ENCODE measurements at regions of chr6 and their contacts with region 1.

Region 1: DNA sequence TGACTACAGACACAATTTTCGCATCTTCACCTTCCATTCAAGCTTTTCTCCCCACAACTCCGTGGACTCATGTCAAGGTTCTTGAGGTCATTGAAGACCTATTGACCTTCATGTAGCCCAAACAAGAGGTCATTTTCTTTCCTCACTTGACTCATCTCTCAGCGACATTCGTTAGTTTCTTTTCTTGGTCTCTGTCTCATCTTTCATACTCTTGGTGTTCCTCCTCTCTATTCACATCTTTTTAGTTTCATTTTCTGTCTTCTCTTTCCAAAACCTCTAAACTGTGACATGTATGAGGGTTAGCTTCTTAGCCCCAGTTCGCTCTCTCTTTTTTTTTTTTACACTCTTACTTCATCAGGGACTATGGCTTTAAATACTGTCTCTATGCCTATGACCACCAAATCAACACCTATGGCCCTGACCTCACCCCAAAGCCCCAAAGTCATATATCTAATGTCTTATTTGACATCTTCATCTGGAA is 128.6 kb upstream of the BACH2 start:
- DNase-seq: peak; percentile 33
- H3K4me3 Mint-ChIP-seq: peak overlapping the region; percentile 72
- H3K27ac Mint-ChIP-seq: peak overlapping the region; percentile 91
- H3K4me1 Mint-ChIP-seq: peaks cover 25% of the 10 kb centered on the region
- H3K27me3 Mint-ChIP-seq: no peaks in the 10 kb centered on the region

Region 2: DNA sequence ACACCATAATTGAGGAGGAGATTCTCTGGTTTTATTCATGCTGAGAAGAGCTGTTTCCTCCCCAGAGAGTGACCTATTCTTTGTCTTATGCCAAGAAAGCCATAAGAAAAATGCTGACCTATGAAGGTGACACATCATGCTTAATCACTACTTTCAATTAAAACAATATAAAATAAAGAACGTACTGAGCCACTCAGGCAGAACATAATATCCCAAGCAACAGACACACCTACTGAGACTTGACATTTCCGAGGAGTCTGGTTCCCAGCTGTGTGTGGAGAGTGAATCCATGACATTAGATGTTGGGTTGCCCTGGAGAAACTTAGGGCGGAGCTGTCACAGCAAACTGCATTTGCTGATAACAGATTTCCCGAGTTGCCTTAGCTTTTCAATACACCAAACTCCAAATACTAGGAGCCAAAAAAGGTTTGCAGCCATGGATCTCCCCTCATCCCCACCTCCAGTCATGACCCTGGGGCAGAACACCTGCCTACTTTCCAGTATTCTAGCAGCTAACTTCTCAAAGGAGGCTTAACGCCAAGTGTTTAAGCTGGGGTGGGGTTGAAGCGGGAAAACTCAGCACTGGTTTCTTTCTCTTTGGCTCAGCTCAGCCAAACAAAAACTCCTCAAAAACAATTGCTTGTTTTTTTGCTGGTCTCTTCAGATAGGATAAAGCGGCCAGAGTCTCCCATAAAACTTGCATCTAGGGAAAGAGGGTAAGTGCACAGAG is 220.7 kb before region 1 on chr6:
- CTCF ChIA-PET with region 1: no interaction called
- POLR2A ChIA-PET with region 1: no interaction called
- DNase-seq: no peak
- H3K4me3 Mint-ChIP-seq: no peak overlapping the region
- H3K27ac Mint-ChIP-seq: no peak overlapping the region
- H3K4me1 Mint-ChIP-seq: peaks cover 23% of the 10 kb centered on the region
- H3K27me3 Mint-ChIP-seq: peaks cover 5% of the 10 kb centered on the region

Region 3: GRCh38 chr6:90403489-90404381 is 21.5 kb before region 1 on chr6:
- CTCF ChIA-PET with region 1: interaction called, 12 read pairs
- POLR2A ChIA-PET with region 1: interaction called, 42 read pairs
- DNase-seq: no peak
- H3K4me3 Mint-ChIP-seq: peak overlapping the region; percentile 10
- H3K27ac Mint-ChIP-seq: peak overlapping the region; percentile 94
- H3K4me1 Mint-ChIP-seq: peaks cover 86% of the 10 kb centered on the region
- H3K27me3 Mint-ChIP-seq: peaks cover 5% of the 10 kb centered on the region

Region 4: GRCh38 chr6:90444160-90444714 is 19.0 kb after region 1 on chr6:
- CTCF ChIA-PET with region 1: interaction called, 4 read pairs
- POLR2A ChIA-PET with region 1: interaction called, 11 read pairs
- DNase-seq: no peak
- H3K4me3 Mint-ChIP-seq: peak overlapping the region; percentile 2
- H3K27ac Mint-ChIP-seq: peak overlapping the region; percentile 3
- H3K4me1 Mint-ChIP-seq: peaks cover 26% of the 10 kb centered on the region
- H3K27me3 Mint-ChIP-seq: no peaks in the 10 kb centered on the region

Region 5: GRCh38 chr6:90466154-90466940 is 41.1 kb after region 1 on chr6:
- CTCF ChIA-PET with region 1: interaction called, 6 read pairs
- POLR2A ChIA-PET with region 1: interaction called, 71 read pairs
- DNase-seq: peak; percentile 53
- H3K4me3 Mint-ChIP-seq: peak overlapping the region; percentile 2
- H3K27ac Mint-ChIP-seq: peak overlapping the region; percentile 82
- H3K4me1 Mint-ChIP-seq: peaks cover 96% of the 10 kb centered on the region
- H3K27me3 Mint-ChIP-seq: peaks cover 10% of the 10 kb centered on the region

Region 6: DNA sequence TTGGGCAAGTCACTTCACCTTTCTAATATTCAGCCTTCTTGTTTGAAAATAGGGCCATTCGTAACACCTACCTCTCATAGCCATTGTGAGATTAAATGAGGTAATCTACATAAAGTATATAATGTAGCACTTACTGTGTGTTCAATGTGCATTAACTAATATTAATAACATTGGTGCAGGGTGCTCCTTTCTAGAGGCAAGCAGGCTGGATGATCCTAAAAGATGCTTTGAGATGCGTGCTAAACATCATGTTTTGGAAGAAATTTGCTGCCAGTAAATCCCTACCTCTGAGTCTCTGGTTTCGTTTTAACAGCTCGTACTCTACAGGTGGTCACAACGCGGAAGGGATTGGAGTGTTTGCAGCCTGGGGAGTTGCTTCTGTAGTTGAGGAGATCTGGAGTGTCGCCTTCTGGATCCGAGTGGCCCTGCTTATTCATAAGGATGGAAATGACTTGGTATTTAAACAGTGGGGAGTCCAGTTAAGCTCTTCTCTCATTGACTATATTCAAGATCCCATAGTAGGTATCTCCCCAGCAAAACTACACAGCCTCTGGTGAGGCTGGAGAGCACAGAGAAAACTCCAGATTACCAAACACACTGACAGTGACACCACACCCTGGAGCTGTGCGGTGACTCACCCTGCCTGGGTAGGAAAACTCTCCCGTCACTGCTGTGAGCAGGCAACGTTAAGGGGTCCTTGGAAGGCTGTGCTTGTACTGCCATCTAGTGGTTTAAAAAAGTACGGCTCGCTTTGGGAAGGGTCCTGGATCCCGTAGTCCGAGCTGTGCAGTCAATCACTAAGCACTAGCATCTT is 53.8 kb after region 1 on chr6:
- CTCF ChIA-PET with region 1: interaction called, 14 read pairs
- POLR2A ChIA-PET with region 1: interaction called, 65 read pairs
- DNase-seq: peak; percentile 85
- H3K4me3 Mint-ChIP-seq: no peak overlapping the region
- H3K27ac Mint-ChIP-seq: peak overlapping the region; percentile 67
- H3K4me1 Mint-ChIP-seq: peaks cover 54% of the 10 kb centered on the region
- H3K27me3 Mint-ChIP-seq: peaks cover 2% of the 10 kb centered on the region

Region 7: DNA sequence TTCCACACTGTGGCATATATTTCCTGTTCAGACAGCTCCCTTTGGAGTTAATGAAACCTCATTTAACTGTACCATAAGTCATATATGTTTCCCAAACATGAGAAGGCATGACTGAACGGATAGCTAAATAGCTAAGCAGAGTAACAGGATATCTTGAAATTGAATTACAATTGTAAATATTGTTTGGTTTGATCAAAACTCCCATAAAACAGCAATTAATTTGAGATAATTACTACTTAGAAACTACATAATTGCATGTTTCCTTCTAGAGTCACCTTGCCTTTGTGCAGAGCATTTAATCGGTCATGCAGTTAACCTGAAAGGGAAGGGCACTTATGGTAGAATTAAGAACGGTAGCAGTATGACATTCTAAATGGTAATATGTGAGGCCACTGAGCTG is 340.7 kb after region 1 on chr6:
- CTCF ChIA-PET with region 1: no interaction called
- POLR2A ChIA-PET with region 1: no interaction called
- DNase-seq: no peak
- H3K4me3 Mint-ChIP-seq: no peak overlapping the region
- H3K27ac Mint-ChIP-seq: no peak overlapping the region
- H3K4me1 Mint-ChIP-seq: no peaks in the 10 kb centered on the region
- H3K27me3 Mint-ChIP-seq: peaks cover 2% of the 10 kb centered on the region

Measured in activated CD4-positive, alpha-beta memory T cell treated with anti-CD3 and anti-CD28 coated beads, Interleukin-2, amount 10 ng/mL, durations not matched to agents 7 days and 5 days (primary cell).